ENCODE measurements at regions of chr2 and their contacts with region 1.

Region 1: GRCh38 chr2:98909317-98910211 is 26.5 kb downstream of the CRACDL start:
- DNase-seq: peak; percentile 87
- ATAC-seq: peak; percentile 67
- H3K4me3 ChIP-seq: peak overlapping the region; percentile 44; the same call in 1 of the 2 replicates
- H3K27ac ChIP-seq: peak overlapping the region; percentile 81
- H3K4me1 ChIP-seq: peaks cover 56% of the 10 kb centered on the region
- H3K27me3 ChIP-seq: no peaks in the 10 kb centered on the region
- CTCF ChIP-seq: no peak

Region 2: DNA sequence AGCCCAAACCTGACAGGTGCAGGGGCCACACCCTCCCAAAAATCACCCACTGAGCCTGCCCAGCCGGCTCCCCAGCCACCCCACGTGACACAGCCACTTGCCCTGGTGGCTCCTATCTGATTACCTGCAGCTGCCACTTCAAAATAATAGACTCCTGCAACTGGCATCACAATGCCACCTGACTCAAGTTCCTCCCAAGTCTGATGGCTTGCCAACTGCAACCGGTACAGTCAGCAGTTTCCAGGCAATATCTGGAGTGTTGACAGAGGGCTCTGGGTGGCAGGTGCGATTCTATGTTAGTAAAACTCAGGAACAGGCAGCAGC is 39.7 kb before region 1 on chr2:
- CTCF ChIA-PET with region 1: no interaction called
- POLR2A ChIA-PET with region 1: no interaction called
- intact Hi-C with region 1: loop called (anchors 10 kb)
- DNase-seq: peak; percentile 81
- ATAC-seq: peak; percentile 35
- H3K4me3 ChIP-seq: no peak overlapping the region
- H3K27ac ChIP-seq: peak overlapping the region; percentile 71
- H3K4me1 ChIP-seq: peaks cover 42% of the 10 kb centered on the region
- H3K27me3 ChIP-seq: no peaks in the 10 kb centered on the region
- CTCF ChIP-seq: no peak